ENCODE measurements at regions of chr4 and their contacts with region 1.

Region 1: DNA sequence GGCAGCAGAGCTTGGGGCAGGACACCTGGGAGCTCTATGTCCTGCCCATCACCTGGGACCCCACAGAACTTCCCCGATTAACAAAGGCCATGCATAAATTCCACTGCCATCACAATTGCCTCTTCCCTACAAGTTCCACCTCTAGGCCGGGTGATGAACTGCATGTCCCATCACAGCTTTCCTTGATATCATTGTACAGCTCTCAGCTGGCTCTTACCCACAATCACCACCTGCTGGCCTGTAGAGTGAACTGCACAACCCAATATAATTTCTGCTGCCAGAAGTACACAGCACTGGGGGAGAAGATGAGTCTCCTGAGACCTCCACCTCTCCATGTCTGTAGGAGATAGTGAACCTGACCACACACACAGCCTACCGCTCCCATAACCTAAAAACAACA is 285.0 kb upstream of the AADAT start:
- DNase-seq: peak; percentile 33 to 65
- H3K4me3 ChIP-seq: no peak overlapping the region
- H3K27ac ChIP-seq: no peak overlapping the region
- H3K4me1 ChIP-seq: no peaks in the 10 kb centered on the region
- H3K27me3 ChIP-seq: no peaks in the 10 kb centered on the region
- CTCF ChIP-seq: peak; percentile 49 to 96 (median 94)
- EP300 ChIP-seq: no peak
- POLR2A ChIP-seq: no peak
- RAD21 ChIP-seq: peak; percentile 69 to 77

Region 2: DNA sequence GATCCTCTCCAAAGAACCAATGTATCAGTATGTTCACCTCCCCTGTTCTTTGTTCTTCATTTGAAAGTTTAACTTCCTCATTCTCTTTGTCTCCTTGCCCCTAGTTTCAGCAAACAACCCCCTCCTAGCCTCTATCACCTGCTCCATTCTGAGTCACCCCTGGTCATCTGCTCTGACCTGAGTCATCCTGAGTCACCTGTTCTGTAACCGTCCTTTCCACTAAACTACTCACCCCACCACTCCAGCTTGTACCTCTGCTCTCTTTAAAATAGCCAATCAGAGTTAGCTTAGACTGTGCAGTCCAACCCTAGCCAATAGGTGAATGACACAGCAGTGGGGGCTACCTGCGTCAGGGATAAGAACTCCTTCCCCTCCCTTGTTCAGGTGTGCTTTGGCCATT is 35.2 kb before region 1 on chr4:
- CTCF ChIA-PET with region 1: no interaction called
- POLR2A ChIA-PET with region 1: no interaction called
- DNase-seq: no peak
- H3K4me3 ChIP-seq: no peak overlapping the region
- H3K27ac ChIP-seq: no peak overlapping the region
- H3K4me1 ChIP-seq: no peaks in the 10 kb centered on the region
- H3K27me3 ChIP-seq: no peaks in the 10 kb centered on the region
- CTCF ChIP-seq: no peak
- EP300 ChIP-seq: no peak
- POLR2A ChIP-seq: no peak
- RAD21 ChIP-seq: no peak

Region 3: DNA sequence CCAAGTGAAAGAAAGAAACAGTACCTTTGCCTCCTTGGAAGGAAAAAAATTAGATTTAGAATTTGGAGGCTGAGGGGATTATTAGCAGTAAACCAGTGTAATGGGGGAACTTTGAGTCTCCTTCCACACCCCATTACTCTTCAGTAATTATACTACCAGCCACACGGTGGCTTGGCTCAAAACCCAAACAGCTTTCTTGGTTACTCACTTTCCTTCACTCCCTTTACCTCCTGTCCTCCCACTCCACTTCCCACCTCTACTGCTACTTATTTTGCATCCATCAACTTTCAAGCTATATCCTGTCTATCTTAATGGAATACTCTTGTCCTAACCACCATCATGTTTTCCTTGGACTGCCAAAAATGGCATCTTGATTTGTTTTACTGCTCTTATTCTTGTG is 25.6 kb after region 1 on chr4:
- CTCF ChIA-PET with region 1: interaction called, 11 read pairs
- POLR2A ChIA-PET with region 1: no interaction called
- DNase-seq: no peak
- H3K4me3 ChIP-seq: no peak overlapping the region
- H3K27ac ChIP-seq: no peak overlapping the region
- H3K4me1 ChIP-seq: no peaks in the 10 kb centered on the region
- H3K27me3 ChIP-seq: no peaks in the 10 kb centered on the region
- CTCF ChIP-seq: peak in 1 of 3 experiments; percentile 40; a peak in 2 of 4 replicates
- EP300 ChIP-seq: no peak
- POLR2A ChIP-seq: no peak
- RAD21 ChIP-seq: peak; percentile 28 to 34; a peak in 3 of 4 replicates

Region 4: GRCh38 chr4:170491981-170492380 is 117.2 kb after region 1 on chr4:
- CTCF ChIA-PET with region 1: no interaction called
- POLR2A ChIA-PET with region 1: no interaction called
- DNase-seq: no peak
- H3K4me3 ChIP-seq: no peak overlapping the region
- H3K27ac ChIP-seq: no peak overlapping the region
- H3K4me1 ChIP-seq: no peaks in the 10 kb centered on the region
- H3K27me3 ChIP-seq: no peaks in the 10 kb centered on the region
- CTCF ChIP-seq: no peak
- EP300 ChIP-seq: no peak
- POLR2A ChIP-seq: no peak
- RAD21 ChIP-seq: no peak

Region 5: GRCh38 chr4:170675568-170676262 is 300.9 kb after region 1 on chr4:
- CTCF ChIA-PET with region 1: no interaction called
- POLR2A ChIA-PET with region 1: no interaction called
- DNase-seq: no peak
- H3K4me3 ChIP-seq: no peak overlapping the region
- H3K27ac ChIP-seq: no peak overlapping the region
- H3K4me1 ChIP-seq: no peaks in the 10 kb centered on the region
- H3K27me3 ChIP-seq: no peaks in the 10 kb centered on the region
- CTCF ChIP-seq: no peak
- EP300 ChIP-seq: no peak
- POLR2A ChIP-seq: no peak
- RAD21 ChIP-seq: no peak